Adrenal gland (tissue), 19 donors: ENCODE measurements at regions of chr12 and their contacts with region 1.

Region 1: DNA sequence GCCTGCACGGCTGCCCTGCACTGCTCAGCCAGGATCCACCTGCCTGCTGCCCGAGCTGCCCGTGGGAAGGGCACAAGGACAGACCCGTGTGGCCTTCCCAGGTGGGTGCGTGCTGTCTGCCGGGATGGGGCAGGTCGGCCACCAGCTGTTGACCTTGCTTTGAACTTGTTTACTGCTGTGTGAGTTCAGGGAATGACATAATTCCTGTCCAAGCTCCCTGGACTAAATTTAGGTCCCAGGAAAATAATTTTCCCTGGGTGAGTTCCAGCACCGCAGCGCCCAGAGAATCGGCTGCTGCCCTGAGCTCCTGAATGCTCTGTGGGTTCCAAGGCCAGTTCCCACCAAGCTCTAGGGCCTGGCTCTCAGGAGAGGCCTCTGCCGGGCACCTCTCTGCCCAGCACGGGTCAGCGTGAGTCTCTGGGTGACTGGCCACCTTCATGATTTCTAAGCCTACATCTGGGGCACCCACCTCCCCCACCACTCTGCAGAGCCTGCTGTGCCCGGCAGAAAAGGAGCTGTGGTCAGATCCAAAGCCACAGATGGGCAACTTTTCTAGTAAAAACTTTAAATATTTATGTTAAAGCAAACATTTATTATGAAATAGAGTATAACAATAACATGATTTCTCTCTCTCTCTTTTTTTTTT is 27.2 kb upstream of the MLXIP start:
- DNase-seq: peak; percentile 62 to 80 (median 68)
- H3K4me3 ChIP-seq: no peak overlapping the region
- H3K27ac ChIP-seq: peak overlapping the region in 4 of 5 donors; percentile 60 to 80 (median 76)
- H3K4me1 ChIP-seq: peaks cover 9 to 14% of the 10 kb centered on the region in 2 donors
- H3K27me3 ChIP-seq: no peaks in the 10 kb centered on the region
- CTCF ChIP-seq: no peak
- POLR2A ChIP-seq: no peak

Region 2: GRCh38 chr12:122123051-122123760 is 71.9 kb after region 1 on chr12:
- intact Hi-C with region 1: loop called (anchors 2 to 5 kb)
- DNase-seq: peak; percentile 62 to 88 (median 74)
- H3K4me3 ChIP-seq: no peak overlapping the region
- H3K27ac ChIP-seq: peak overlapping the region in 3 of 5 donors; percentile 33 to 52 (median 36)
- H3K4me1 ChIP-seq: peaks cover 0 to 45% of the 10 kb centered on the region in 2 donors
- H3K27me3 ChIP-seq: no peaks in the 10 kb centered on the region
- CTCF ChIP-seq: peak; percentile 76 to 91 (median 81)
- POLR2A ChIP-seq: no peak

Region 3: GRCh38 chr12:122159882-122160281 is 108.5 kb after region 1 on chr12:
- intact Hi-C with region 1: no loop called
- DNase-seq: no peak
- H3K4me3 ChIP-seq: no peak overlapping the region
- H3K27ac ChIP-seq: no peak overlapping the region
- H3K4me1 ChIP-seq: no peaks in the 10 kb centered on the region
- H3K27me3 ChIP-seq: no peaks in the 10 kb centered on the region
- CTCF ChIP-seq: no peak
- POLR2A ChIP-seq: no peak

Region 4: DNA sequence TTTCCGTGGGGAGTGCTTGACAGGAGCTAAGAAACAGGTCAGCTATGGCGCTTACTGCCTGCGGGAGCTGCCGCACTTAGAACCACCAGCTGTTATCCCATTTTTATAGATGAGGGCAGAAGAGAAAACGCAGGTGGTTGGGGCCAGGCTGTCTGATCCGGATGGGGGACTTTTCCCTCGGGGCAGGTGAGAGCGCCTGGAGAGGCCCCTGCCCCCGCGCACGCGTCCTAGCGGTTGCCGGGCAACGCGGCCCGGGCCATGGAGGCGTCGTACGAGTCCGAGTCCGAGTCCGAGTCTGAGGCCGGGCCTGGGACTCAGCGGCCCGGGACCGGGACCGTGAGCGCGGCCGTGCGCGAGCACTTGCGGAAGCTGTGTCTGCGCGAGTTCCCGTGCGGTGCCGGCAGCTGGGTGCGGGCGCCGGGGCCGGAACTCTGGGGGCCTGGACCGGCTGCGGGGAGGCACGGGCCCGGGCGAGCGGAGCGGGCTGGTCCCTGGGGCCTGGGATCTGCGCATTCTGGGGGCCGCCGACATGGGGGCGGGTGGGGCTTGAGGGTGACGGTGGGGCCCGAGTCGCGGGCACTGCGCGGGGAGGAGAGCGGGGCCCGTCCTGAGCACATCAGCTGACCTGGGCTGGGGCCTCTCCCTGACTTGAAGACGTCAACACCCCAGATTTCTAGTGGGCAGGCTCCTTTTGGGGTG is 131.7 kb after region 1 on chr12 and contains the start of gene LRRC43:
- intact Hi-C with region 1: loop called in 1 of 2 experiments (anchors 10 kb)
- DNase-seq: peak in 6 of 7 donors; percentile 31 to 68 (median 45)
- H3K4me3 ChIP-seq: peak within 1 kb of the TSS in 3 of 4 donors; percentile 33 to 82 (median 65)
- H3K27ac ChIP-seq: no peak within 1 kb of the TSS
- H3K4me1 ChIP-seq: no peaks in the 10 kb centered on the region
- H3K27me3 ChIP-seq: no peaks in the 10 kb centered on the region
- CTCF ChIP-seq: no peak
- POLR2A ChIP-seq: no peak
- total RNA-seq, gene LRRC43: 0.17 to 4.5 (median 1.2) TPM